Heart left ventricle (tissue), 16 donors: ENCODE measurements at regions of chr1 and their contacts with region 1.

Region 1: GRCh38 chr1:61491497-61491896 is 233.4 kb downstream of the TM2D1 start:
- DNase-seq: peak in 1 of 5 donors; percentile 29
- ATAC-seq: peak; percentile 81 to 91 (median 86)
- H3K4me3 ChIP-seq: no peak overlapping the region
- H3K27ac ChIP-seq: peak overlapping the region in 8 of 12 donors; percentile 2 to 75 (median 50)
- H3K4me1 ChIP-seq: peaks cover 0 to 18% (median 6%) of the 10 kb centered on the region in 12 donors
- H3K27me3 ChIP-seq: no peaks in the 10 kb centered on the region
- CTCF ChIP-seq: no peak
- POLR2A ChIP-seq: no peak

Region 2: DNA sequence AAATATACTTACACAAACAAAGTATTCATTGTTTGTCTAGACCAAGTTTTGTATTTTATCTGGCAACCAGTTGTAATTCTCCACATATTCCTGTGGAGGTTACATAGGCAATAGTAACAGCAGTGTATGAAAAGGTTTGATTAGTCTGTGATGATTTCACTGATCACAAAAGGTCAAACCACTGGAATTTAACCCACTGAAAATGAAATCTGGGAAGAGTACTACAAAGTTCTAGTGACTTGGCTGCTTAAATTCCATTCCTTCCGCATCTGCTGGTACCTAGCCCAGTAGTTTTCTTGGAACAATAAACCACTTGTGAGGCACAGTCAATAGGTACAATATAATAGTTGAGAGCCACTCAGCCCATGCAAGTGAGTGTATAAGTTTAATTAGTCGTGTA is 203.8 kb before region 1 on chr1:
- intact Hi-C with region 1: no loop called
- DNase-seq: no peak
- ATAC-seq: peak in 2 of 4 donors; percentile 40 to 71
- H3K4me3 ChIP-seq: no peak overlapping the region
- H3K27ac ChIP-seq: no peak overlapping the region
- H3K4me1 ChIP-seq: peaks cover 0 to 47% (median 18%) of the 10 kb centered on the region in 12 donors
- H3K27me3 ChIP-seq: no peaks in the 10 kb centered on the region
- CTCF ChIP-seq: no peak
- POLR2A ChIP-seq: no peak

Region 3: GRCh38 chr1:61606448-61607312 is 115.2 kb after region 1 on chr1:
- intact Hi-C with region 1: loop called in 1 of 10 experiments (anchors 10 kb)
- DNase-seq: peak; percentile 63 to 83 (median 68)
- ATAC-seq: peak; percentile 89 to 94 (median 94)
- H3K4me3 ChIP-seq: peak overlapping the region in 1 of 12 donors; percentile 5
- H3K27ac ChIP-seq: peak overlapping the region; percentile 42 to 89 (median 76)
- H3K4me1 ChIP-seq: peaks cover 0 to 28% (median 0%) of the 10 kb centered on the region in 12 donors
- H3K27me3 ChIP-seq: no peaks in the 10 kb centered on the region
- CTCF ChIP-seq: no peak
- POLR2A ChIP-seq: no peak